ENCODE measurements at regions of chr16 and their contacts with region 1.

Region 1: GRCh38 chr16:6081320-6081976 is 983.9 kb upstream of the EEF2KMT start:
- DNase-seq: peak in 1 of 2 experiments; percentile 27
- H3K4me3 ChIP-seq: no peak overlapping the region
- H3K27ac ChIP-seq: no peak overlapping the region
- H3K4me1 ChIP-seq: no peaks in the 10 kb centered on the region
- H3K27me3 ChIP-seq: peaks cover 16% of the 10 kb centered on the region; the same call in 1 of the 2 replicates
- CTCF ChIP-seq: peak; percentile 83

Region 2: DNA sequence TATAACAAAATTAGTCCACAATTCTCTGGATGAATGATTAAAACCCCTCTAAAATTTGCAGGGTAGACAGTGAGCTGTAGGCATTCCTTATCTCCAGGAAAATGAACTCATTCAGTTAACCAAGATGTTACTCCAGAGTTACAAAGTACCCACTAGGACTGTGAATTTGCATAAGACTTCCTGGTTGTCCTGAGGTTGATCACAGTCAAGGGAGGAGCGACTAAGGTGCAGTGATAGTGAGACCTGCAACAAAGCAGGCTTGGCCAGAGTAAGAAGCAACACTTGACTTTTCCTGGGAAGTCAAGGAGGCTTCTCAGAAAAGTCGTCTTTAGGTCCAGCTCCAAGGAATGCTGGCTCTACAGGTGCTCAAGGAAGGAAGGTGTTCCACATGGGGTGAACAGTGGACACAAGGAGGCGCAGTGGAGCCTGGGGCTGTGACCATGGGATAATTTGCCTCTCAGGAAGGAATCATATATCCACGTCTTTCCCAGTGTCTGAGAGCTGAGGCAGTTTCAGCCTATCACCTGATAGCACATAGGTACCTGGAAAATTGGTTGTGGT is 162.8 kb before region 1 on chr16:
- CTCF ChIA-PET with region 1: no interaction called
- POLR2A ChIA-PET with region 1: no interaction called
- intact Hi-C with region 1: loop called (anchors 10 kb)
- DNase-seq: no peak
- H3K4me3 ChIP-seq: no peak overlapping the region
- H3K27ac ChIP-seq: no peak overlapping the region
- H3K4me1 ChIP-seq: no peaks in the 10 kb centered on the region
- H3K27me3 ChIP-seq: peaks cover 54% of the 10 kb centered on the region
- CTCF ChIP-seq: peak; percentile 44; the same call in 1 of the 2 replicates

Measured in PC-9 (cell line).